Activated naive CD4-positive, alpha-beta T cell treated with anti-CD3 and anti-CD28 coated beads for 36 hours (primary cell): ENCODE measurements at regions of chr11 and their contacts with region 1.

Region 1: DNA sequence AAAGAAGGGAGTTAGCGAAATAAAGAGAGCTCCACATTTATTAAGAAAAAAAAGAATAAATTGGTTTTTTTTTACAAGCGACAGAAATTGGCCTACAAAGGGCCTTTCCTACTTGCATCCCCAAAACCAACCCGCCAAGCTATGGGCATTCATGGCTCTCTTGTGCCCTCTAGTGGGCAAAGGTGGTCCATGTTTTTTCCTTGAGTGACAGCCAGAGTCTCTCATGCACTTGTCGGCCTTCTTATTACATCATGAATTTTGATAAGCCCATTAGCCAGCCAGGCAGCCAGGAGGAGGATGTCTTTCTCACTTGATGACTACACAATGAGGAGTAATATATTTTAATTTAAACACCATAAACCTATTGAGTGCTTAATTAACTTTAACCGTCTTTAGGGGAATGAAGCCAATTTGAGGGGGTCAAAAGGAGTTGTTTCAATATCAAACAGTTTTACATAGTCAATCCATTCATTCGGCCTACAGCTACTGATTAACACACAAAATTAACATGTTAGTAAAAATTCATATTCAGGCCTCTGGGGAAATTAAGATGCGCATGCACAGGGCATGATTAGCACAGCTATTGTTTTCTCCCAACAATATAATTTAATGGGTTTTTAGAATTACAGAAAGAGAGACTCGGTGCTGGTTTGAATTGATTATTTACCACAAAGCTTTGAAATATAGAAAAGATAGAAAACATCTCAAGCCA is 85.5 kb downstream of the RCN1 start:
- DNase-seq: peak; percentile 91
- H3K4me3 Mint-ChIP-seq: no peak overlapping the region
- H3K27ac Mint-ChIP-seq: no peak overlapping the region
- H3K4me1 Mint-ChIP-seq: peaks cover 6% of the 10 kb centered on the region
- H3K27me3 Mint-ChIP-seq: no peaks in the 10 kb centered on the region

Region 2: DNA sequence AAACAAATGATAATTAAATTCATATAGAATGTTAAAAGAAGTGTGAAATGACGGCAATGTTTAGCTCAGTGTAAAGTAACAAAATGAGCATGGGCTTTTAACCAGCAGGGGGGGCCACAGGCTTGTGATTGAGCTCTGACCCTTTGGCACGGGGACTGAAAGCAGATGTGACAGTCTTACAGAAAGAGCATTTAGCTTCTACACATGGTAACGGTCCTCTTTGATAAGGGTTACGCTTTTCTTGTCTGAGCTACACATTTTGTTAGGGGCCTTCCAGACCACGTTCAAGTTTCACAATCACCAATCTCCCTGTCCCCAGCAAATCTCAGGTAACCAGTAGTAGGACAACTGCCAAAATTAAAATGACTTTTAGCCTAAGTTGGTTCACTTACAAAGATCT is 1069.3 kb before region 1 on chr11:
- CTCF ChIA-PET with region 1: interaction called, 3 read pairs
- intact Hi-C with region 1: loop called (anchors 1 kb)
- DNase-seq: peak; percentile 75
- H3K4me3 Mint-ChIP-seq: no peak overlapping the region
- H3K27ac Mint-ChIP-seq: no peak overlapping the region
- H3K4me1 Mint-ChIP-seq: no peaks in the 10 kb centered on the region
- H3K27me3 Mint-ChIP-seq: peaks cover 2% of the 10 kb centered on the region

Region 3: GRCh38 chr11:31397239-31397834 is 779.0 kb before region 1 on chr11:
- CTCF ChIA-PET with region 1: no interaction called
- intact Hi-C with region 1: loop called (anchors 1 kb)
- DNase-seq: no peak
- H3K4me3 Mint-ChIP-seq: no peak overlapping the region
- H3K27ac Mint-ChIP-seq: no peak overlapping the region
- H3K4me1 Mint-ChIP-seq: no peaks in the 10 kb centered on the region
- H3K27me3 Mint-ChIP-seq: no peaks in the 10 kb centered on the region

Region 4: DNA sequence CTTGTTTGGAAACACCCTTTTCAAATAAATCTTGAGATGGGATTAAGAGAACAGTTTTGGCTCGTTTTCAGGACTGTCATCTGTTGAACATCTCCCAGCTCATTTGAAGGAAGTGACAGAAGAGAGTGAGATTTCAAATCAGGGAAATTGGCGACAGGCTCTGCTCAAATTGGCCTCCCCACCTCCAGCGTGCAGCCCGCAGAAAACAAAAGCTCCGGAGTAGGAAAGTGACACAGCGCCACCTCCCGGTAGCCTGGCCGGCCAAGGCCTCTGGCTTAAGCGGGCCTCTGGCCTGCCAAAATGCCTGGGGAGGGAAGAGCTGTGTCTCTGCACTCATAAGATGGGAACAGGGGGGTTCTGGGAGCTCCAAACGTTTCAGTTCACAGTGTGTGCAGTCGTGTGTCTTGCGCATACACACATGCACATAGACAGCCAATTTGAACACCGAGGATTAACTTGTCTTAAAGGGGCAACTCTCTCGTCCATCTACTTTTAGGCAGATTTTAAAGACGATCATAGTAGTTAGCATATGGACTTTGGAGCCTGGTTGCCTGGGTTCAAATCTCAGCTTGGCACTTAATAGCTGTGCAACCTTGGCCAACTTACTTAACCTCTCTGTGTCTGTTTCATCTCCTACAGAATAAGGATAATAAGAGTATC is 218.2 kb before region 1 on chr11:
- CTCF ChIA-PET with region 1: interaction called, 4 read pairs
- intact Hi-C with region 1: loop called (anchors 5 kb)
- DNase-seq: peak; percentile 76
- H3K4me3 Mint-ChIP-seq: no peak overlapping the region
- H3K27ac Mint-ChIP-seq: no peak overlapping the region
- H3K4me1 Mint-ChIP-seq: no peaks in the 10 kb centered on the region
- H3K27me3 Mint-ChIP-seq: no peaks in the 10 kb centered on the region

Region 5: DNA sequence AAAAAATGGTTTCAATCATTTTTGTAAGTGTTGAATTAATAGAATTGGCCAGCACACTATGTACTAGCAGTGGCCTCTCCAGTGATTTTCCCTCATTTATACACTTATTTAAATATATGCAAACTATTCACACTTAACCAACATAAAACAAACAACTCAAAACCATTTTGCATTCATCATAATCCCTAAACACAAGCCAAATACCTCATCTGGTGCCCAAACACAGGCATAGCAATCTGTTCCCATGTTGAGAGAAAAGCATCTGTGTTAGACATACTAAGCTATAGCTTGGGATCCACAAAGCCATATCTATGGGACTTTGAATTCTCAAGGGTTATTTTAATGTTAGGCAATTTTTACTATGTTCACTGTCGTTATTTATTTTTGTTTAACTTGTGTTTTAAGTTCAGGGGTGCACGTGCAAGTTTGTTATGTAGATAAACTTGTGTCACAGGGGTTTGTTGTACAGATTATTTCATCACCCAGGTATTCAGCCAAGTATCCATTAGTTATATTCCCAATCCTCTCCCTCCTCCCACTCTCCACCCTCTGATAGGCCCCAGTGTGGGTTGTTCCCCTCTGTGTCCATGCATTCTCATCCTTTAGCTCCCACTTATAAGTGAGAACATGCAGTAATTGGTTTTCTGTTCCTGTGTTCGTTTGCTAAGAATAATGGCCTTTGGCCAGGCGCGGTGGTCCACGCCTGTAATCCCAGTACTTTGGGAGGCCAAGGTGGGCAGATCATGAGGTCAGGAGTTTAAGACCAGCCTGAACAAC is 116.5 kb before region 1 on chr11:
- CTCF ChIA-PET with region 1: interaction called, 111 read pairs
- intact Hi-C with region 1: no loop called
- DNase-seq: no peak
- H3K4me3 Mint-ChIP-seq: no peak overlapping the region
- H3K27ac Mint-ChIP-seq: no peak overlapping the region
- H3K4me1 Mint-ChIP-seq: no peaks in the 10 kb centered on the region
- H3K27me3 Mint-ChIP-seq: peaks cover 22% of the 10 kb centered on the region

Region 6: GRCh38 chr11:32225571-32226285 is 49.3 kb after region 1 on chr11:
- CTCF ChIA-PET with region 1: no interaction called
- intact Hi-C with region 1: no loop called
- DNase-seq: no peak
- H3K4me3 Mint-ChIP-seq: no peak overlapping the region
- H3K27ac Mint-ChIP-seq: no peak overlapping the region
- H3K4me1 Mint-ChIP-seq: no peaks in the 10 kb centered on the region
- H3K27me3 Mint-ChIP-seq: peaks cover 2% of the 10 kb centered on the region

Region 7: GRCh38 chr11:32297611-32298011 is 121.2 kb after region 1 on chr11:
- CTCF ChIA-PET with region 1: interaction called, 14 read pairs
- intact Hi-C with region 1: loop called (anchors 1 kb)
- DNase-seq: no peak
- H3K4me3 Mint-ChIP-seq: no peak overlapping the region
- H3K27ac Mint-ChIP-seq: no peak overlapping the region
- H3K4me1 Mint-ChIP-seq: no peaks in the 10 kb centered on the region
- H3K27me3 Mint-ChIP-seq: no peaks in the 10 kb centered on the region